A673 (cell line): ENCODE measurements at regions of chr3 and their contacts with region 1.

Region 1: GRCh38 chr3:17841190-17841828 is 98.9 kb upstream of the TBC1D5 start:
- DNase-seq: peak; percentile 77
- H3K4me3 ChIP-seq: no peak overlapping the region
- H3K27ac ChIP-seq: no peak overlapping the region
- H3K4me1 ChIP-seq: no peaks in the 10 kb centered on the region
- H3K27me3 ChIP-seq: peaks cover 14% of the 10 kb centered on the region
- CTCF ChIP-seq: peak; percentile 95

Region 2: DNA sequence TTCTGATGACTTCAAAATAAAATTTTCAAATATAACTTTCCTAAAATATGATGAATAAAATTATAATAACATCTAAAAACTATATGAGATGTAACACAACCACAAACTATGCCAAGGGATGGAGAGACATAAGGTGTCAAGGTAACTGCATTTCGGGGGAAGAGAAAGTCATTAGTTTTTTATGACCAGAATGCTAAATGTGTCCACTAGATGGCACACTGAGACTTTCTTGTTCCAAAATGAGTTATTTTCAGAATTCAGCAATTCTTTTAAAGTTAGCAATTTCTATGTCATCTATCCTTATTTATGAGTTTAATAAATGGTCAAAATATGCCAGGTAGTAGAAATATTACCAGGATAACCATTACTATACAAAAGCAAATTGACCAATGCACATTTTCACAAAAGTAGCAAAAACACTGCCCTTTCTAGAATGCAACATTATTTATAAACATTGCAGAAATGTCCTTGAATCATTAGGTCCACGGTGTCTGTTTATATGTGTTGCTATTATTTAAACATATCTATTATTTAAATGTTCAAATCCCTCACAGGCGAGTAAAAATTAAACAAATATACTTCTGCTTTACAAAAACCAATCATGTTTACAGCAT is 582.4 kb before region 1 on chr3:
- CTCF ChIA-PET with region 1: interaction called, 3 read pairs
- POLR2A ChIA-PET with region 1: no interaction called
- intact Hi-C with region 1: loop called (anchors 5 kb)
- DNase-seq: peak; percentile 47
- H3K4me3 ChIP-seq: no peak overlapping the region
- H3K27ac ChIP-seq: no peak overlapping the region
- H3K4me1 ChIP-seq: no peaks in the 10 kb centered on the region
- H3K27me3 ChIP-seq: no peaks in the 10 kb centered on the region
- CTCF ChIP-seq: peak; percentile 75

Region 3: DNA sequence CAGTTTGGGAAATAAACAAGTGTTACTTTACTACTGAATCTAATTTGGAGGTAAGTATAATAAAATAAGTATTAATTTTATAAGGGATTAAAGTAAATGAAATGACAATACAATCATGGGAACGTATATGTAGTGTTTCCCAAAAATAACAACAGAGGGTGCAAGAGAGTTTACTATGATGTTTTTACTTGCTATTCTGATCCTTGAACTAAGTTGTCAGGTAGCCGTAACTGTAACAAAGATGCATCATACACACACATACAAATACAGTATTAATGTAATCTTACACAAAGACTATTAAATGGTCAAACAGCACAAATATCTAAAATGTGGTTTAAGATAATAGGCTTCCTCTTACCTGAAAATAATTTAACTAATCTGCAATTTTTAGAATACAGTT is 410.3 kb before region 1 on chr3:
- CTCF ChIA-PET with region 1: interaction called, 6 read pairs
- POLR2A ChIA-PET with region 1: no interaction called
- intact Hi-C with region 1: loop called (anchors 1 kb)
- DNase-seq: peak; percentile 43
- H3K4me3 ChIP-seq: no peak overlapping the region
- H3K27ac ChIP-seq: no peak overlapping the region
- H3K4me1 ChIP-seq: no peaks in the 10 kb centered on the region
- H3K27me3 ChIP-seq: no peaks in the 10 kb centered on the region
- CTCF ChIP-seq: peak; percentile 63

Region 4: DNA sequence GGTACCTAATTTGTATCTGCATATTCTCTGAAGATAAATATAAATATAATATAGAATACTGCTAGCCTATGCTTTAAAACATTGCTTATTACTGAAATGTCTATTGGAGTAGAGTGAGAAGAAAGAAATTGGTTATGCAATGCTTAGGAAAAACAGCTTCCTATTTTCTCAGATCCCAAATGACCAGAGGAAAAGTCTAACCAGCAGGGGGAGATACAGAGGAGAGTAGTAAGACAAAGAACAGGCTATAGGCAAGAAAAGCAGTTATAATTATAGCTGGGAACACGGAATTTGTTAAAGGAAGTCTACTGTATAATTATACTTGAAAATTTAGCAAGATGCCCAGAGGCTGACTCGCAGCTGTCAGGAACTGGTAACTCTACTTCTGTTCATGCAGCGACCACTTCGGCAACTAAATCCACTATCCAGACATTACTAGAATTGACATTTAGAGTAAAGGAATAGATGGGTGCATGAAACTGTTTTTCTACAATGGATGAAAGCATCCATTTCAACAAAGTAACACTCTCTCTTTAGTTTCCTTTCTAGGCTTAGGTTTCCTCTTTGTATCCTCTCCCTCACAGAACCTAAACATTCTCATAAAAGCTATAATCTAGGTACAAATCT is 196.1 kb before region 1 on chr3:
- CTCF ChIA-PET with region 1: interaction called, 21 read pairs
- POLR2A ChIA-PET with region 1: no interaction called
- intact Hi-C with region 1: loop called (anchors 1 kb)
- DNase-seq: peak; percentile 78
- H3K4me3 ChIP-seq: no peak overlapping the region
- H3K27ac ChIP-seq: no peak overlapping the region
- H3K4me1 ChIP-seq: peaks cover 8% of the 10 kb centered on the region
- H3K27me3 ChIP-seq: no peaks in the 10 kb centered on the region
- CTCF ChIP-seq: peak; percentile 83

Region 5: GRCh38 chr3:18194431-18194830 is 353.1 kb after region 1 on chr3:
- CTCF ChIA-PET with region 1: no interaction called
- POLR2A ChIA-PET with region 1: no interaction called
- intact Hi-C with region 1: no loop called
- DNase-seq: peak; percentile 1
- H3K4me3 ChIP-seq: no peak overlapping the region
- H3K27ac ChIP-seq: no peak overlapping the region
- H3K4me1 ChIP-seq: no peaks in the 10 kb centered on the region
- H3K27me3 ChIP-seq: no peaks in the 10 kb centered on the region
- CTCF ChIP-seq: no peak